Ascending aorta (tissue), 2 donors: ENCODE measurements at regions of chr7 and their contacts with region 1.

Region 1: GRCh38 chr7:77222065-77222464 is 22.4 kb upstream of the FGL2 start:
- DNase-seq: no peak
- H3K4me3 ChIP-seq: no peak overlapping the region
- H3K27ac ChIP-seq: no peak overlapping the region
- H3K4me1 ChIP-seq: no peaks in the 10 kb centered on the region
- H3K27me3 ChIP-seq: no peaks in the 10 kb centered on the region
- CTCF ChIP-seq: no peak

Region 2: GRCh38 chr7:77205706-77206105 is 16.4 kb before region 1 on chr7:
- intact Hi-C with region 1: loop called (anchors 2 kb)
- DNase-seq: no peak
- H3K4me3 ChIP-seq: no peak overlapping the region
- H3K27ac ChIP-seq: no peak overlapping the region
- H3K4me1 ChIP-seq: peaks cover 0 to 6% of the 10 kb centered on the region in 2 donors
- H3K27me3 ChIP-seq: no peaks in the 10 kb centered on the region
- CTCF ChIP-seq: no peak